Right cardiac atrium (tissue), 5 donors: ENCODE measurements at regions of chr3 and their contacts with region 1.

Region 1: GRCh38 chr3:106206146-106206545 is 337.3 kb upstream of the CBLB start:
- DNase-seq: no peak
- ATAC-seq: peak; percentile 26 to 55
- H3K4me3 ChIP-seq: no peak overlapping the region
- H3K27ac ChIP-seq: no peak overlapping the region
- H3K4me1 ChIP-seq: no peaks in the 10 kb centered on the region
- H3K27me3 ChIP-seq: no peaks in the 10 kb centered on the region

Region 2: DNA sequence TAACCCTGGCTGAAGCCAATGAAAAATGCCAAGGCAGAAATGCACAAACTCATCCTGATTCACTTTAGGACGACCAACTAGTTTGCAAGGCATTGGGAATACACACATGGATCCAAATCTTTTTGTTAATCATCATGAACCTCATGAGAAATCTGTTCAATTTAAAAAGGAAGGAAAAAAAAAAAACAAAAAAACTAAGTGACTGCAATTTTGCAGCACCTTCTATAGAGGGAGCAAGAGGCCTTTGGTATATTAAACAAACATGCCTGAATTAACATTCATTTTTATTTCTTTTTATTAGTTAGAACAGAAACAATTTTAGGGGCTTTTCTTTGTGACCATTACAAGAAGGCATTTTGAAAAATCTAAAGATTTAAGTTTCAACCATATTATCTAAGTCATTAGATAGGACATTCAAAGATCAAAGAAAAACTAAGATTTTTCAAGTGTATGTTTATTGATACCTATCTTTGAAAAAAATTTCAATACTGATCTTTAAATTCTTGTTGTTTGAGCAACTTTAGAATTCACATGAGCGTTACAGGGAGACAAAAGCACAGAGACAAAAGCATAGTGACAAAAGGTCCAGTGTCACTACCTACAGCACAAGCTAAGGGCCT is 519.8 kb before region 1 on chr3:
- intact Hi-C with region 1: loop called in 1 of 4 experiments (anchors 10 kb)
- DNase-seq: no peak
- ATAC-seq: no peak
- H3K4me3 ChIP-seq: no peak overlapping the region
- H3K27ac ChIP-seq: no peak overlapping the region
- H3K4me1 ChIP-seq: no peaks in the 10 kb centered on the region
- H3K27me3 ChIP-seq: no peaks in the 10 kb centered on the region

Region 3: GRCh38 chr3:105885256-105885655 is 320.9 kb before region 1 on chr3:
- intact Hi-C with region 1: loop called in 1 of 4 experiments (anchors 10 kb)
- DNase-seq: no peak
- ATAC-seq: no peak
- H3K4me3 ChIP-seq: no peak overlapping the region
- H3K27ac ChIP-seq: no peak overlapping the region
- H3K4me1 ChIP-seq: no peaks in the 10 kb centered on the region
- H3K27me3 ChIP-seq: no peaks in the 10 kb centered on the region

Region 4: DNA sequence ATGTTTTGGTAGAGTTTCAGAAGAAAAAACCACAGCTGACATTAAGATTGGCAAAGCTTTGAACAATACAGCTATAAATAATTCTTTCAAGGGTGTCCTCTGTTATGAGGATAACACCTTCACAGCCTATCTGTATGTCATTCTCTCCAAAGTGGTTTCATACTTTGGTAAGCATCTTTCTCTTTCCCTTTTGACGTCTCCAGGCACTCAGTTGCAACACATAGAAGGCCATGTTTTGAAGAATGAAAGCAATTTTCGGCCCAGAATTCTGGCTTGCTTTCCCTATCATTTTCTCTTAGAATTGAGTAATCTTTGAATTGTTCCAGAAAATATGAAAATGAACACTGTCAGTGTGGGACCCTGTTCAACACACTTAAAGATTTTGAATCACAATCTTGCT is 137.4 kb before region 1 on chr3:
- intact Hi-C with region 1: loop called in 1 of 4 experiments (anchors 10 kb)
- DNase-seq: no peak
- ATAC-seq: peak; percentile 79 to 92
- H3K4me3 ChIP-seq: no peak overlapping the region
- H3K27ac ChIP-seq: no peak overlapping the region
- H3K4me1 ChIP-seq: peaks cover 3% of the 10 kb centered on the region
- H3K27me3 ChIP-seq: no peaks in the 10 kb centered on the region

Region 5: DNA sequence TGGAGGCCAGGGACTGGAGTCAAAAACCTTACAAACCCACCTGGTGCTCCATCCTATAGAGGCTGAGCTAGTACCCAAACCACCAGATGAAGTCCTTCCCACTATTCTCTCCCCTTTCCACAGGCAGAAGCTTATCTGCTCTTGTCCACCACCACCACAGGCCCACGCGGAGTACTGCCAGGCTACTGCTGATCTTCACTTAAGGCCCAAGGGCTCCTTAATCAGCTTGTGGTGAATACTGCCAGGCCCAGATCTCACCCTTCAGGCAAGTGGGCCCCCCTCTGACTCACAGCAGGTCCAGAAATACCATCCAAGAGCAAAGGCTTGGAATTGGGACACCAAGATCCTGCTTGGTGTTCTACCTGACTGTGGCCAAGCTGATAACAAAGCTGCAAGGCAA is 260.7 kb after region 1 on chr3:
- intact Hi-C with region 1: no loop called
- DNase-seq: no peak
- ATAC-seq: no peak
- H3K4me3 ChIP-seq: no peak overlapping the region
- H3K27ac ChIP-seq: no peak overlapping the region
- H3K4me1 ChIP-seq: no peaks in the 10 kb centered on the region
- H3K27me3 ChIP-seq: no peaks in the 10 kb centered on the region

Region 6: DNA sequence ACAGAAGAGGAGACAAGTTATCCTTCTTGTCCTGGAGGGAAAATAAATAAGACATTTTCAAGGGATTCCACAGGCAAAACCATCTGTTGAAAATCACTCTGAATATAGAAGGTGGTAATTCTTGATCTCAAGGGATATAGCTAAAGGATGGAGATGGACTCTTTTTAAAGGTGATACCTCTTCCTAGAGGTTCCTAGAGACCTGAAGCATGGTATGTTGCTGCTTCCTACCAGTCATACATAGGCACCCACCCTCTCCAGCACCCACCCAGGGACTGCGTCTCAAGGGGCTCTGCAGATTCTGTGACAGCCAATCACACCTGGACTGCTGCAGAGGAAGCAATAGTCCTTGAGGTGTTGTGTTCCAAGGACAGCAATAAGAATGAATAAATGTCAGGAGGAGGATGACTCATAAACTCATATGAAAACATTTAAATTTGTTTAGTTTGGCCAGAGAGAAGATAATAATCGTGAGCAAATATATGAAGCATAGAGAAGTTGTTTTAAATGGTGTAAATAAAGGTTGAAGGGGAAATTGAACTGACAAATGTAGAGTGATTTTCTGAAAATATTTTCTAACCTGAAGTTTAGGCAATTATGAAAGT is 404.3 kb after region 1 on chr3:
- intact Hi-C with region 1: no loop called
- DNase-seq: no peak
- ATAC-seq: no peak
- H3K4me3 ChIP-seq: no peak overlapping the region
- H3K27ac ChIP-seq: no peak overlapping the region
- H3K4me1 ChIP-seq: no peaks in the 10 kb centered on the region
- H3K27me3 ChIP-seq: no peaks in the 10 kb centered on the region